Panc1 (cell line): ENCODE measurements at regions of chr1 and their contacts with region 1.

Region 1: GRCh38 chr1:158583962-158584361 is 4.3 kb upstream of the OR10X1 start:
- DNase-seq: no peak
- ATAC-seq: no peak
- H3K4me3 ChIP-seq: no peak overlapping the region
- H3K27ac ChIP-seq: no peak overlapping the region
- H3K4me1 ChIP-seq: no peaks in the 10 kb centered on the region
- H3K27me3 ChIP-seq: no peaks in the 10 kb centered on the region
- CTCF ChIP-seq: no peak

Region 2: DNA sequence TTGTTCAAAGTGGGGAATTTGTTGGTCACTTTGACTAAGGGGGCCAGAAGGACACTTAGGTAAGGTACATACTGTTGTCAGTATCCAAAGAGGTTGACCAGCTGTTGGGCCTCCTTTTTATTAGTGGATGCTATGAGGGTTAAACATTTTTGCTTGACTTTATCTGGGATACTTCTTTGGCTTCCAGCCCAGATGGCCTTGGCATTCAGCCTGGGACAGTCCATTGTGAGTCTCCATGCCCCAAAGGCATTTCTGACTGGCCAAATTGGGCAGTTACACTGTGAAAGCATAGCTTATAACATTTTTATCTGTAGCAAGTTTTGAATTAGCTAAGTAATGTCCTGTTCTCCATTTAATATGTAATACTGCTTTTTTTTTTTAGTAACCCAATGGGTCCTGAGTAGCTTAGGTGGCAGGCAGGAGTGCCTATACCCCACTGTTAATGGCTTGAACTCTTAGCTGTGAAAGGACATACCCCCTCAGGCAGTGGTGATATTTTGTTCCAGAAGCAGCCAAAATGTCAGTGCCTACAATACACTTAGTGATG is 438.7 kb before region 1 on chr1:
- CTCF ChIA-PET with region 1: no interaction called
- POLR2A ChIA-PET with region 1: no interaction called
- in situ Hi-C with region 1: no loop called
- intact Hi-C with region 1: no loop called
- DNase-seq: no peak
- ATAC-seq: no peak
- H3K4me3 ChIP-seq: no peak overlapping the region
- H3K27ac ChIP-seq: no peak overlapping the region
- H3K4me1 ChIP-seq: no peaks in the 10 kb centered on the region
- H3K27me3 ChIP-seq: no peaks in the 10 kb centered on the region
- CTCF ChIP-seq: no peak

Region 3: GRCh38 chr1:158527190-158527815 is 56.7 kb before region 1 on chr1:
- CTCF ChIA-PET with region 1: no interaction called
- POLR2A ChIA-PET with region 1: interaction called, 11 read pairs
- in situ Hi-C with region 1: no loop called
- intact Hi-C with region 1: no loop called
- DNase-seq: no peak
- ATAC-seq: no peak
- H3K4me3 ChIP-seq: no peak overlapping the region
- H3K27ac ChIP-seq: no peak overlapping the region
- H3K4me1 ChIP-seq: no peaks in the 10 kb centered on the region
- H3K27me3 ChIP-seq: no peaks in the 10 kb centered on the region
- CTCF ChIP-seq: no peak

Region 4: GRCh38 chr1:158552296-158552695 is 31.7 kb before region 1 on chr1:
- CTCF ChIA-PET with region 1: no interaction called
- POLR2A ChIA-PET with region 1: no interaction called
- in situ Hi-C with region 1: no loop called
- intact Hi-C with region 1: no loop called
- DNase-seq: no peak
- ATAC-seq: no peak
- H3K4me3 ChIP-seq: no peak overlapping the region
- H3K27ac ChIP-seq: no peak overlapping the region
- H3K4me1 ChIP-seq: no peaks in the 10 kb centered on the region
- H3K27me3 ChIP-seq: no peaks in the 10 kb centered on the region
- CTCF ChIP-seq: no peak

Region 5: DNA sequence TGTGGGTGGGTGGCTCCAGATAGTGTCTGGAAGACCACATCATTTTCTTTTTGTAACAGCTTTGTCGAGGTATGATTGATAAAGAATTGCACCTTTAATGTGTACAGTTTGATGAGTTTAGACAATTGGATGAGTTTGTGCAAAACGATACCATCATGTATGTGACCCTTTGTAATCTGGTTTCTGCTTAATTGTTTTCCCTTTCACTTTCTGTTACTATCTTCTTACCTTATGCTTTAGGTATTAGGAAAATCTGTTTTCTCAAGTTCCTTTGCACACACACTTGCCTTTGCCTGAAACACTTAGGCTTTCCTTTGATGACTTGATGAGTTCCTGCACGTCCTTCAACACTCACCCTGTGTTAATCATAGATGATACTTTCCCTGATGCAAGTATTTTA is 28.0 kb after region 1 on chr1:
- CTCF ChIA-PET with region 1: no interaction called
- POLR2A ChIA-PET with region 1: no interaction called
- in situ Hi-C with region 1: no loop called
- intact Hi-C with region 1: no loop called
- DNase-seq: no peak
- ATAC-seq: no peak
- H3K4me3 ChIP-seq: no peak overlapping the region
- H3K27ac ChIP-seq: no peak overlapping the region
- H3K4me1 ChIP-seq: no peaks in the 10 kb centered on the region
- H3K27me3 ChIP-seq: no peaks in the 10 kb centered on the region
- CTCF ChIP-seq: no peak

Region 6: DNA sequence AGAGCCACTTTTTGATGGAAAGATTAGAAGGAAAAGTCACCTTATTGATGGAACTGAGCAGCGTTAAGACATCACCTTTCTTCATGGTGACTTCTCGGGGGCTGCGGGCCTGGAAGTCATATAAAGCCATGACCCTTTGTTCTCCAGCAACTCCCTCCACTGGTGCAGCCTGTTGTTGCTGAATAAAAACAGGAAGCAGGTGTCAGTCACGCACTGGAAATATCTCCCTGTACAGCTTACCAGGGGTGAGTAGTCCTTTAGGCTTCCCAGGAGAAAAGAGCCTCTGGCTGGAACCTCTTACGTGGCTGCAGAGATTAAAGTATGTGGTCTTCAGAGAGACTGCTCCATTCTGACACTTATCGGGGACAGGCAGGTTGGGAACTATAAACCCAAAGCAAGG is 70.6 kb after region 1 on chr1:
- CTCF ChIA-PET with region 1: no interaction called
- POLR2A ChIA-PET with region 1: no interaction called
- in situ Hi-C with region 1: no loop called
- intact Hi-C with region 1: no loop called
- DNase-seq: no peak
- ATAC-seq: no peak
- H3K4me3 ChIP-seq: no peak overlapping the region
- H3K27ac ChIP-seq: no peak overlapping the region
- H3K4me1 ChIP-seq: no peaks in the 10 kb centered on the region
- H3K27me3 ChIP-seq: no peaks in the 10 kb centered on the region; the same call in 1 of the 2 replicates
- CTCF ChIP-seq: no peak